Heart right ventricle (tissue), 16 donors: ENCODE measurements at regions of chr13 and their contacts with region 1.

Region 1: GRCh38 chr13:40069173-40070044 is 413.9 kb downstream of the COG6 start:
- DNase-seq: peak; percentile 78 to 83
- ATAC-seq: peak; percentile 90 to 96 (median 92)
- H3K4me3 ChIP-seq: peak overlapping the region in 4 of 10 donors; percentile 3 to 25 (median 15)
- H3K27ac ChIP-seq: peak overlapping the region in 2 of 10 donors; percentile 3 to 4
- H3K4me1 ChIP-seq: peaks cover 0 to 17% (median 7%) of the 10 kb centered on the region in 9 donors
- H3K27me3 ChIP-seq: no peaks in the 10 kb centered on the region
- CTCF ChIP-seq: peak; percentile 68 to 94 (median 88)

Region 2: GRCh38 chr13:38990693-38991092 is 1078.7 kb before region 1 on chr13 and contains the start of gene STOML3:
- intact Hi-C with region 1: no loop called
- DNase-seq: no peak
- ATAC-seq: no peak
- H3K4me3 ChIP-seq: no peak within 1 kb of the TSS
- H3K27ac ChIP-seq: no peak within 1 kb of the TSS
- H3K4me1 ChIP-seq: no peaks in the 10 kb centered on the region
- H3K27me3 ChIP-seq: no peaks in the 10 kb centered on the region
- CTCF ChIP-seq: no peak
- total RNA-seq, gene STOML3: not detected

Region 3: GRCh38 chr13:39765801-39766463 is 303.5 kb before region 1 on chr13:
- intact Hi-C with region 1: loop called in 1 of 10 experiments (anchors 5 kb)
- DNase-seq: peak; percentile 26 to 34
- ATAC-seq: peak; percentile 54 to 93 (median 84)
- H3K4me3 ChIP-seq: no peak overlapping the region
- H3K27ac ChIP-seq: peak overlapping the region in 1 of 10 donors; percentile 21
- H3K4me1 ChIP-seq: peaks cover 0 to 25% (median 9%) of the 10 kb centered on the region in 9 donors
- H3K27me3 ChIP-seq: no peaks in the 10 kb centered on the region
- CTCF ChIP-seq: peak in 7 of 9 donors; percentile 29 to 52 (median 46)

Region 4: GRCh38 chr13:40137400-40137799 is 68.0 kb after region 1 on chr13:
- intact Hi-C with region 1: no loop called
- DNase-seq: no peak
- ATAC-seq: no peak
- H3K4me3 ChIP-seq: no peak overlapping the region
- H3K27ac ChIP-seq: no peak overlapping the region
- H3K4me1 ChIP-seq: peaks cover 0 to 6% (median 0%) of the 10 kb centered on the region in 9 donors
- H3K27me3 ChIP-seq: no peaks in the 10 kb centered on the region
- CTCF ChIP-seq: no peak

Region 5: DNA sequence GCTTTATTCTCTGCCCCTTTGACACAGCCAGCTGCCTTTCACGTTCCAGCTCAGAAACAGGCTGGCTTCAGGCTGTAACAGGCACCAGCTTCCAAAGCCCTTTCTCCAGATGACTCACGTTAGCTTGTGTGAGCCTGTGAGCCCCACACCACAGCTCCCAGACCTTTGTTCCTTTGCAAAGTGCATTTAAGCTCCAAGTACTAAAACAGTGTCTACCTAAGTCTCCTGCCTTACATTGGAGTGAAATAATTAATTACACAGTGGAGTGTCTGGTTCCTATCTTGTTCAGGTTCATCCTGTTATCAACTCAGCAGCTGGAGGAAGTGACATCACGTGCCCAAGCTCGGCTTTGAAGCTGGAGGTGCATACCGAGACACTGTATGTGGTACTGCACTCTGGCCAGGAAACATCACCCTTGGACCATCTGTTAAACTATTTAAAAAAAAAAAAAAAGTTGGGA is 121.3 kb after region 1 on chr13:
- intact Hi-C with region 1: loop called in 3 of 10 experiments (anchors 5 to 10 kb)
- DNase-seq: no peak
- ATAC-seq: peak; percentile 42 to 64 (median 56)
- H3K4me3 ChIP-seq: no peak overlapping the region
- H3K27ac ChIP-seq: peak overlapping the region; percentile 32 to 89 (median 78)
- H3K4me1 ChIP-seq: peaks cover 20 to 55% (median 42%) of the 10 kb centered on the region in 9 donors
- H3K27me3 ChIP-seq: no peaks in the 10 kb centered on the region
- CTCF ChIP-seq: no peak

Region 6: DNA sequence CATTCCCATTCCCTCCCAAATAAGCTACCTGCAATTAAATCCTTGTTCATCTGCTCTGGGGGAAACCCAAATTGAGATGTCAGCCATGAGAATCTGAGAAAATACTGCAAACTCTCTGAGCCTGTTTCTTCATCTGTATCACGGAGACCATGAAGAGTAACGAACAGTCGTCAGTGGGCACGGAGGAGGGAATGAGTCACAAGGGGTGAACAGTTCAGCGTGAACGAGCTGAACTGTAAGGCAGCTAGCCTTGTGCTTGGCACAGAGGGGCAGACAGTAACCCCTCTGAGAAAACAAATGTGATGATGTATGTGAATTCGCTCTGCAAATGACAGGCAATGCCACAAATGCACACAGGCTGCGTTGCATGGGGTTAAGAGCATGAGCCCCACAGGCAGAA is 308.4 kb after region 1 on chr13:
- intact Hi-C with region 1: loop called in 1 of 10 experiments (anchors 10 kb)
- DNase-seq: no peak
- ATAC-seq: no peak
- H3K4me3 ChIP-seq: no peak overlapping the region
- H3K27ac ChIP-seq: no peak overlapping the region
- H3K4me1 ChIP-seq: peaks cover 0 to 23% (median 6%) of the 10 kb centered on the region in 9 donors
- H3K27me3 ChIP-seq: no peaks in the 10 kb centered on the region
- CTCF ChIP-seq: no peak

Region 7: GRCh38 chr13:40445557-40445990 is 376.2 kb after region 1 on chr13:
- intact Hi-C with region 1: loop called in 1 of 10 experiments (anchors 5 kb)
- DNase-seq: peak; percentile 56 to 72
- ATAC-seq: peak; percentile 71 to 91 (median 84)
- H3K4me3 ChIP-seq: no peak overlapping the region
- H3K27ac ChIP-seq: peak overlapping the region in 6 of 10 donors; percentile 13 to 70 (median 58)
- H3K4me1 ChIP-seq: peaks cover 7 to 58% (median 43%) of the 10 kb centered on the region in 9 donors
- H3K27me3 ChIP-seq: no peaks in the 10 kb centered on the region
- CTCF ChIP-seq: no peak

Region 8: GRCh38 chr13:40682449-40683240 is 613.2 kb after region 1 on chr13:
- intact Hi-C with region 1: loop called (anchors 1 to 5 kb)
- DNase-seq: no peak
- ATAC-seq: peak in 2 of 8 donors; percentile 12 to 30
- H3K4me3 ChIP-seq: no peak overlapping the region
- H3K27ac ChIP-seq: no peak overlapping the region
- H3K4me1 ChIP-seq: peaks cover 0 to 27% (median 13%) of the 10 kb centered on the region in 9 donors
- H3K27me3 ChIP-seq: no peaks in the 10 kb centered on the region
- CTCF ChIP-seq: peak; percentile 57 to 83 (median 70)